ENCODE measurements at regions of chr17 and their contacts with region 1.

Region 1: GRCh38 chr17:39621523-39622379 is 5.0 kb upstream of the PPP1R1B start:
- DNase-seq: peak; percentile 91
- ATAC-seq: peak; percentile 68
- H3K4me3 Mint-ChIP-seq: peak overlapping the region; percentile 62
- H3K27ac Mint-ChIP-seq: peak overlapping the region; percentile 91
- H3K4me1 Mint-ChIP-seq: peaks cover 26% of the 10 kb centered on the region
- H3K27me3 Mint-ChIP-seq: peaks cover 18% of the 10 kb centered on the region

Region 2: DNA sequence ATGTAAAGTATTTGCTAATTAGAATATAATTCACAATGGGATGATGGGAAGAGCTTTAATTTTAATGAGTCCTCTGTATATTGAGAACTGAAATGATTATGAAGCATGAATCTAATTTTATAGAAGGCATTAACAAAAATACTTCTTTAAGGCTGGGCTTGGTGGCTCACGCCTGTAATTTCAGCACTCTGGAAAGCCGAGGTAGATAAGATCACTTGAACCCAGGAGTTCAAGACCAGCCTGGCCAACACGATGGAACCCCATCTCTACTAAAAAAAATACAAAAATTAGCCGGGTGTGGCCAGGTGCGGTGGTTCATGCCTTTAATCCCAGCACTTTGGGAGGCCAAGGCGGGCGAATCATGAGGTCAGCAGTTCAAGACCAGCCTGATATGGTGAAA is 148.4 kb before region 1 on chr17:
- CTCF ChIA-PET with region 1: no interaction called
- POLR2A ChIA-PET with region 1: no interaction called
- intact Hi-C with region 1: no loop called
- DNase-seq: no peak
- ATAC-seq: no peak
- H3K4me3 Mint-ChIP-seq: no peak overlapping the region
- H3K27ac Mint-ChIP-seq: no peak overlapping the region
- H3K4me1 Mint-ChIP-seq: peaks cover 3% of the 10 kb centered on the region
- H3K27me3 Mint-ChIP-seq: no peaks in the 10 kb centered on the region

Region 3: GRCh38 chr17:39527220-39527813 is 94.4 kb before region 1 on chr17:
- CTCF ChIA-PET with region 1: interaction called, 4 read pairs
- POLR2A ChIA-PET with region 1: no interaction called
- intact Hi-C with region 1: loop called in 1 of 2 experiments (anchors 2 kb)
- DNase-seq: no peak
- ATAC-seq: no peak
- H3K4me3 Mint-ChIP-seq: no peak overlapping the region
- H3K27ac Mint-ChIP-seq: no peak overlapping the region
- H3K4me1 Mint-ChIP-seq: peaks cover 14% of the 10 kb centered on the region
- H3K27me3 Mint-ChIP-seq: no peaks in the 10 kb centered on the region

Region 4: GRCh38 chr17:39564211-39564848 is 57.4 kb before region 1 on chr17:
- CTCF ChIA-PET with region 1: interaction called, 10 read pairs
- POLR2A ChIA-PET with region 1: no interaction called
- intact Hi-C with region 1: no loop called
- DNase-seq: no peak
- ATAC-seq: no peak
- H3K4me3 Mint-ChIP-seq: no peak overlapping the region
- H3K27ac Mint-ChIP-seq: no peak overlapping the region
- H3K4me1 Mint-ChIP-seq: no peaks in the 10 kb centered on the region
- H3K27me3 Mint-ChIP-seq: no peaks in the 10 kb centered on the region

Region 5: DNA sequence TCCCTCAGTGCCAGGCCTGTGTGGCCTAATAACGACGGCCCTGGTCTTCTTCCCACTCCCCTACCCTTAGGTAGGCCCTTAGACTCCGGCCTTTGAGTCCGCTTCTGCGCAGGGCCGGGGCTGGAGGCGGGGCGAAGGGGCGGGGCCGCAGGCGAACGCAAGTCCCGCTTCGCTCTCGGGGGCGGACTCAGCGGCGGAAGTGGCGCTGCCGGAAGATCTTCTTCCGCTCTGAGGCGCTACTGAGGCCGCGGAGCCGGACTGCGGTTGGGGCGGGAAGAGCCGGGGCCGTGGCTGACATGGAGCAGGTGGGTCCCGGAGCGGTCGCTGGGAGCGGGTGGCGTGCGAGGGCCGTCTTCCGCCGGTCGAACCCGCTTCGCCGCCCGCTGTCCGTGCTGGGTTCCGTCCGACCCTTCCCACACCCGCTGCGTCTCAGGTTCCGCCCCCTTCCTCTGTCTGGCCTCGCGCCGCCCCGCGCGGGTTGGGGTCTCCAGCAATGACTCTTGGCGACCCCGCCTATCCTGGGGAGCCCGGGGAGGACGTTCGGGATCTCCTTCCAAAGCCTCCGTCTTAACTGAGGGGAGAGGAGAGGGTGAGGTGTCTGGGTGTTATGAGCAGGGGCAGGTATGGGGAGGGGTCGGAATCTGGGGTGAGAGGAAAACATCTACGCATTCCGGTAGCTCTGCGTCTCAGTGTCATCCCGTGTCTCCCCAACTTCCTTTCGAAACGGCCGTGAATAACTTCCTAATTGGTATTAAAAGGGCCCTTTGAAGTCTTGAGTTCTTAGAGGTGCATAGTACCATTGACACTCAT is 15.4 kb after region 1 on chr17 and contains the start of gene STARD3:
- CTCF ChIA-PET with region 1: interaction called, 181 read pairs
- POLR2A ChIA-PET with region 1: no interaction called
- intact Hi-C with region 1: loop called (anchors 1 kb)
- DNase-seq: peak; percentile 96
- ATAC-seq: peak; percentile 87
- H3K4me3 Mint-ChIP-seq: peak within 1 kb of the TSS; percentile 86
- H3K27ac Mint-ChIP-seq: peak within 1 kb of the TSS; percentile 83
- H3K4me1 Mint-ChIP-seq: peaks cover 51% of the 10 kb centered on the region
- H3K27me3 Mint-ChIP-seq: no peaks in the 10 kb centered on the region
- total RNA-seq, gene STARD3: 46.8 to 77.9 TPM

Region 6: GRCh38 chr17:39730095-39730921 is 108.6 kb after region 1 on chr17 and contains the start of gene MIEN1:
- CTCF ChIA-PET with region 1: interaction called, 24 read pairs
- POLR2A ChIA-PET with region 1: no interaction called
- intact Hi-C with region 1: loop called in 1 of 2 experiments (anchors 1 kb)
- DNase-seq: peak; percentile 97
- ATAC-seq: peak; percentile 92
- H3K4me3 Mint-ChIP-seq: peak within 1 kb of the TSS; percentile 90
- H3K27ac Mint-ChIP-seq: peak within 1 kb of the TSS; percentile 88
- H3K4me1 Mint-ChIP-seq: peaks cover 15% of the 10 kb centered on the region
- H3K27me3 Mint-ChIP-seq: no peaks in the 10 kb centered on the region
- total RNA-seq, gene MIEN1: 32.5 to 39.4 TPM

Measured in activated CD4-positive, alpha-beta T cell treated with anti-CD3 and anti-CD28 coated beads for 36 hours (primary cell).